ENCODE measurements at regions of chr11 and their contacts with region 1.

Region 1: GRCh38 chr11:96162816-96163499 is 180.0 kb downstream of the MAML2 start:
- DNase-seq: peak in 1 of 2 donors; percentile 67
- ATAC-seq: peak; percentile 77 to 93 (median 86)
- H3K4me3 ChIP-seq: no peak overlapping the region
- H3K27ac ChIP-seq: peak overlapping the region; percentile 6 to 79 (median 62)
- H3K4me1 ChIP-seq: peaks cover 0 to 57% (median 41%) of the 10 kb centered on the region in 9 donors
- H3K27me3 ChIP-seq: no peaks in the 10 kb centered on the region
- CTCF ChIP-seq: no peak

Region 2: DNA sequence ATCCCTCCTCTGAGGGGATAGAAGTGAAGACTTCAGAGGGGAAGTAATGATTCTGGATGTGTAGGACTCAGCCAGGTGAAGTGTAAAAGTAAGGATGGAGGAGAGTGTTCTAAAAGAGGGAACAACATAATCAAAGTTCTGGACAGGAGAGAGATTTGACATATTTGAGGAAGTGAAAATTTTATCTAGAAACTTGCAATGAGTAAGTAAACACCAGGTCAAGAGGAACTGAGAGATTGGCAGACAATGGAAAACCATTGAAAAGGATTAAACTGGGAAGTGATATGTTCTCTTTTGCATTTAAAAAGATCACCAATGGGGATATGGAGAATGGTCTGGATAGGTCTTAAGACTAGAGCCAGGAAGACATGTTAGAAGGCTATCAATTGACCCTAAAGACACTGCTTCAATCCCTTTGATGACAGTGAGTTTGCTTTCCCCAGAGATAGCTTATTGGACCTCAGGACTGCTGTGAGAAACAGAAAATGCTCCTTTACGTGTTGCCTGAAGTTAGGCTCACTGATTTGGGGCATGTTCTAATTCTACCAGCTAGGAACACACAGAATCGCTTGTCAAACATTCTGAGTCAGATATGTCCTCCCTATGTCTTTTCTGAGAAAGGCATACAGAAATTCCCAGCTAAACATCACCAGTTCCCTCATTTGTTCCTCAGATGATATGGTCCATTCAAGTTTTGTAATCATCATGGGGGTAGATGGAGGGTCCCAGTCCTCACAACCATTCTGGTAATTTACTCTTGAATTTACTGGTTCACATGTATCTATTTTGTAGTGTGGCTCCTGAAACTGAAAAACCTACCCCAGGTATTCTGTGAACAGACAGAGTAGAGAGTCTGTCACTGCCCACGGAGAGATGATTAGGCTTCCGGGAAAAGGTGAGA is 35.1 kb after region 1 on chr11:
- intact Hi-C with region 1: loop called in 1 of 10 experiments (anchors 5 kb)
- DNase-seq: no peak
- ATAC-seq: no peak
- H3K4me3 ChIP-seq: no peak overlapping the region
- H3K27ac ChIP-seq: peak overlapping the region in 3 of 10 donors; percentile 3 to 59 (median 44)
- H3K4me1 ChIP-seq: peaks cover 4 to 61% (median 41%) of the 10 kb centered on the region in 9 donors
- H3K27me3 ChIP-seq: no peaks in the 10 kb centered on the region
- CTCF ChIP-seq: no peak

Region 3: DNA sequence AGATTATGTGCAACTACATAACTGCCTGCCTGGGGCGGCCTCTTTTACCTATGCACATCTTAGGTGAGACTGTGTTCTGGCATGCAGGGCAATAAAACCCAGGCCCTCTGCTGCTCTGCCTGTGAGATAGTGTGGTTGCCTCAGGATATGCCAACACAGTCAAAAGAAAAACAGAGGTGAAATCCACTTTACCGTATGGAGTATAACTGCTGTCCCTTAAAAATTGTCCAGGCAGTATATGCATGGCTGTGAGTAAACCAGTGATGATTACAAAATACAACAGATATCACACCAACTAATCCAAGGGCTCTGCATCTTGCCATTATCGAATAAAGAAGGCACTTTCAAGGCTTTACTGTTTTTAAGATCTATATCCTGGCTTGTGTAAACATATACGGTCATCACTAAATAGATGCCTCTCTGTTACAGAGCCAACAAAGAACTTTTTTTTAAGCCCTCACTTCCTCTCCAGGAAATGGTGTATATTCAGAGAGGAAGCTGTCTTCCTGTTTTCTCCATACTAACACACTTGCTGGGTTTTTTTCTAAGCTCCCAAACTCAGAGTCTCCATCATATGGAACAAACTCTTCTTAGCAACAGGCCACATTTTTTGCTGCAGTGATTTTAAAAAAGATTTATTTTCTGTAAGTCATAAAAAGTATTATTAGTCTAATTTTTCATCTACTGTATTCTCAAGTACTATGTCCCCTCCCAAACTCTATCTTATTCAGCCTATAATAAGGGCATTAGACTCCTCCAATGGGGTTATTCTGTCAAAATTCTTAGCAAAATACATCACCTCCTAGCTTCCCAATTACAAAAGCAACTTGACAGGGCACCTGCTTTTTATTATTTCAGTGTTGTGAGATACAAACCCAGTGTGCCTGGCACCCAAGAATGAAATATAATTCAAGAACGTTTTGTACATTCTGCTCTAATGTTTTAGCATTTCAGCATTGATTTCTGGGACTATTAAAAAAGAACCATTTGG is 44.8 kb after region 1 on chr11:
- intact Hi-C with region 1: loop called in 3 of 10 experiments (anchors 5 to 10 kb)
- DNase-seq: no peak
- ATAC-seq: peak in 7 of 8 donors; percentile 63 to 79 (median 75)
- H3K4me3 ChIP-seq: no peak overlapping the region
- H3K27ac ChIP-seq: peak overlapping the region in 9 of 10 donors; percentile 7 to 84 (median 51)
- H3K4me1 ChIP-seq: peaks cover 0 to 64% (median 36%) of the 10 kb centered on the region in 9 donors
- H3K27me3 ChIP-seq: no peaks in the 10 kb centered on the region
- CTCF ChIP-seq: no peak